MCF 10A (cell line): ENCODE measurements at regions of chr2 and their contacts with region 1.

Region 1: DNA sequence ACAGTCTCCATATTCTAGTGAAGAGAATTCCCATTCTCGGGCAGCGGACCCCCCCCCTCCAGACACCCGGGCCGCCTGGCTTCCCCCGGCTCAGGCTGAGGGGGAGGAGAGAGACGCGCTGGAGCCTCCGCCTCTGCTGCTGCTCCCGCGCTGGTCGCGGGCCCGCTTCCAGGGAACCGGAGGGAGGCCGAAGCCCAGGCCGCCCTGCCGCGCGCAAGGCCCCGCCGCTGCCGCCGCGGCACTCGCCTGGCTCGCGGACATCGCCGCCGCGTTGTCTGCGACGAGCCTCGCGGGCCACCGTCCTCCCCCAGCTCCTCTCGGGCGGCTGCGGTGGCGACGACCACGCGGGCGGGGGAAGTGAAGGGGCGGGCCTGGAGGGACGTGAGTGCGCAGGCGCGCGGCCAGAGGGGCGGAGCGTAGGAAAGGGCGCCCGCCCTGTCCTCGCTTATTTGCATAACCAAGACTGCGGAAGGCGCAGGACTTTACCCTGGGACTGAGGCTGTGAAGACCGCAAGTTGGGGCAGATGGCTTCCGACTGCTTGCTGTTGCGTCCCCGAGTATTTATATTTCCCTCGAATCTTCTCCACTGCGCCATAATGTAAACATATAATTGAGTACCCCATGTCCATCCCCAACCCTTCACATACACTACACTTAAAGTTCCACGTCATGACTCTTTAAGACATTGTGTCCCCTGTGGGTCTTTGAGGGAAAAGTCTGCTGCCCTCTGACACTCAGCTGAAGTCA is at the start of gene ARL5A:
- DNase-seq: peak; percentile 95
- H3K4me3 Mint-ChIP-seq: peak within 1 kb of the TSS; percentile 93
- H3K27ac Mint-ChIP-seq: peak within 1 kb of the TSS; percentile 88
- H3K4me1 Mint-ChIP-seq: peaks cover 9% of the 10 kb centered on the region
- H3K27me3 Mint-ChIP-seq: no peaks in the 10 kb centered on the region
- CTCF ChIP-seq: no peak
- total RNA-seq, gene ARL5A: 34.8 and 40.9 TPM in 2 replicates

Region 2: GRCh38 chr2:151007365-151007764 is 821.0 kb before region 1 on chr2:
- CTCF ChIA-PET with region 1: no interaction called
- POLR2A ChIA-PET with region 1: no interaction called
- intact Hi-C with region 1: no loop called
- DNase-seq: no peak
- H3K4me3 Mint-ChIP-seq: no peak overlapping the region
- H3K27ac Mint-ChIP-seq: no peak overlapping the region
- H3K4me1 Mint-ChIP-seq: no peaks in the 10 kb centered on the region
- H3K27me3 Mint-ChIP-seq: no peaks in the 10 kb centered on the region
- CTCF ChIP-seq: no peak

Region 3: GRCh38 chr2:151802315-151802714 is 26.0 kb before region 1 on chr2:
- CTCF ChIA-PET with region 1: interaction called, 12 read pairs
- POLR2A ChIA-PET with region 1: interaction called, 10 read pairs
- intact Hi-C with region 1: no loop called
- DNase-seq: no peak
- H3K4me3 Mint-ChIP-seq: no peak overlapping the region
- H3K27ac Mint-ChIP-seq: no peak overlapping the region
- H3K4me1 Mint-ChIP-seq: no peaks in the 10 kb centered on the region
- H3K27me3 Mint-ChIP-seq: no peaks in the 10 kb centered on the region
- CTCF ChIP-seq: no peak

Region 4: GRCh38 chr2:151840216-151841046 is 12.1 kb after region 1 on chr2:
- CTCF ChIA-PET with region 1: no interaction called
- POLR2A ChIA-PET with region 1: interaction called, 20 read pairs
- intact Hi-C with region 1: no loop called
- DNase-seq: no peak
- H3K4me3 Mint-ChIP-seq: no peak overlapping the region
- H3K27ac Mint-ChIP-seq: no peak overlapping the region
- H3K4me1 Mint-ChIP-seq: no peaks in the 10 kb centered on the region
- H3K27me3 Mint-ChIP-seq: no peaks in the 10 kb centered on the region
- CTCF ChIP-seq: no peak

Region 5: DNA sequence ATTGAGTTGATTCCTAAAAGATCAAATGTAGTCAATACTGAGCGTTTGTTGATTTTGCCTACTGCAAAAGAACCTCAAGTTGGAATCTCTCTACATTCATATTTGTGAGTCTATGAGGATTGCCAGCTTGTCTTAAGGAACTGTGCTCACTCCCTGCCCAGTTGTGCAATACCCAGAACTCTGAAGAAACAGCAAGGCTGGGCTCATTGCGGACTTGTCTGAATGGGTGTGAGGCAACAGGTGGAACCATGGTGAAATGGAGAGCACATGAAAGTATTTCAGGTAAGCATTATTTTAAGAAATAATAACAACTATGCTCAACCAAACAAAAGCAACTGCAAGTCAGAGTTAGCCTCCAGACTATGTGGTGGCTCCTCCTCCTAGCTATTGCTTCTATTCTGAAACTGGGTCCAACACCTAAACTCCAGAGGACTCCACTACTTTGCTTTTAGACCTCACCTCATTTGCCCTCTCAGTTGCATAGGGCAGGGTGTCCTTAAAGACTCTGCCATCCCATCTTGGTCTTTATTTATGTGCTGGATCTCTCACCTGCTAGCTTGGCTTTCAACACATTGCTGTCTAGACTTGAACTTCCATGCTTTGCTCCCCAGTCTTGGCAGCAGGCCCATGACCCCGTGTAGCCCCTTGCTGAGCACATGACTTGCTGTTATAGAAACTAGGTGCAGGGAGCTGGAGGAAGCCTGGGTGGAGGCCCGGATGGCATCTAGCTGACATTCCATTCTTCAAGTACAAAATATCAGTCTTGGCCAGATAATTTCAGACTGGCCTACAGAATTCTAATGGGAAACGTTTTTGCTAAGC is 94.7 kb after region 1 on chr2:
- CTCF ChIA-PET with region 1: interaction called, 3 read pairs
- POLR2A ChIA-PET with region 1: interaction called, 37 read pairs
- intact Hi-C with region 1: loop called (anchors 5 kb)
- DNase-seq: peak; percentile 95
- H3K4me3 Mint-ChIP-seq: peak overlapping the region; percentile 6
- H3K27ac Mint-ChIP-seq: peak overlapping the region; percentile 63
- H3K4me1 Mint-ChIP-seq: peaks cover 33% of the 10 kb centered on the region
- H3K27me3 Mint-ChIP-seq: no peaks in the 10 kb centered on the region
- CTCF ChIP-seq: no peak

Region 6: GRCh38 chr2:151959238-151959637 is 130.9 kb after region 1 on chr2:
- CTCF ChIA-PET with region 1: interaction called, 5 read pairs
- POLR2A ChIA-PET with region 1: interaction called, 31 read pairs
- intact Hi-C with region 1: no loop called
- DNase-seq: peak; percentile 51
- H3K4me3 Mint-ChIP-seq: no peak overlapping the region
- H3K27ac Mint-ChIP-seq: peak overlapping the region; percentile 81
- H3K4me1 Mint-ChIP-seq: peaks cover 16% of the 10 kb centered on the region
- H3K27me3 Mint-ChIP-seq: no peaks in the 10 kb centered on the region
- CTCF ChIP-seq: no peak